ENCODE measurements at regions of chr5 and their contacts with region 1.

Region 1: GRCh38 chr5:68215208-68215897 is at the start of gene PIK3R1:
- DNase-seq: peak; percentile 96
- ATAC-seq: peak; percentile 85
- H3K4me3 Mint-ChIP-seq: peak within 1 kb of the TSS; percentile 83
- H3K27ac Mint-ChIP-seq: peak within 1 kb of the TSS; percentile 97
- H3K4me1 Mint-ChIP-seq: peaks cover 45% of the 10 kb centered on the region
- H3K27me3 Mint-ChIP-seq: no peaks in the 10 kb centered on the region
- total RNA-seq, gene PIK3R1: 40.0 to 49.0 TPM

Region 2: GRCh38 chr5:67165526-67166459 is 1049.6 kb before region 1 on chr5:
- CTCF ChIA-PET with region 1: no interaction called
- POLR2A ChIA-PET with region 1: no interaction called
- intact Hi-C with region 1: loop called in 1 of 2 experiments (anchors 10 kb)
- DNase-seq: peak; percentile 89
- ATAC-seq: peak; percentile 76
- H3K4me3 Mint-ChIP-seq: peak overlapping the region; percentile 74
- H3K27ac Mint-ChIP-seq: peak overlapping the region; percentile 97
- H3K4me1 Mint-ChIP-seq: peaks cover 57% of the 10 kb centered on the region
- H3K27me3 Mint-ChIP-seq: no peaks in the 10 kb centered on the region

Region 3: GRCh38 chr5:68170826-68171558 is 44.4 kb before region 1 on chr5:
- CTCF ChIA-PET with region 1: no interaction called
- POLR2A ChIA-PET with region 1: no interaction called
- intact Hi-C with region 1: no loop called
- DNase-seq: no peak
- ATAC-seq: no peak
- H3K4me3 Mint-ChIP-seq: no peak overlapping the region
- H3K27ac Mint-ChIP-seq: no peak overlapping the region
- H3K4me1 Mint-ChIP-seq: no peaks in the 10 kb centered on the region
- H3K27me3 Mint-ChIP-seq: no peaks in the 10 kb centered on the region

Region 4: GRCh38 chr5:68239487-68239886 is 24.1 kb after region 1 on chr5:
- CTCF ChIA-PET with region 1: interaction called, 8 read pairs
- POLR2A ChIA-PET with region 1: interaction called, 5 read pairs
- intact Hi-C with region 1: loop called (anchors 1 to 2 kb)
- DNase-seq: peak; percentile 92
- ATAC-seq: peak; percentile 97
- H3K4me3 Mint-ChIP-seq: peak overlapping the region; percentile 57
- H3K27ac Mint-ChIP-seq: peak overlapping the region; percentile 76
- H3K4me1 Mint-ChIP-seq: peaks cover 78% of the 10 kb centered on the region
- H3K27me3 Mint-ChIP-seq: no peaks in the 10 kb centered on the region

Region 5: DNA sequence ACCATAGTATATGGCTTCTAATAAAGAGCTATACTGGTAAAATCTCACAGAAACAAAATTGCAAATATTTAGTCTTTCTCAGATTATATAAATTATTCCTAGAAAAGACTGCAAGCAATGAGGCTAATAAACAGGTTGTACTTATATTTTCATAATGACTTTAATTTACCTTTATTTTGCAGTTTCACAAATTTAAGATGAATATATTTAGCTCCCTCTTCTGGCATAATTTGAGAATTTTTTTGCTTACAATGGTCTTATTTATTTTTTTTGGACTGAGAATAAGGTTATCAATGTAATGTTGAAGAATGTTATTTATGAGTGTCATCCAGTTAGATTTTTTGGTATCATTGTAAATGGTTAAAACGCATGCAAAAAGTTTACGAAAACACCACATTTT is 56.9 kb after region 1 on chr5:
- CTCF ChIA-PET with region 1: interaction called, 9 read pairs
- POLR2A ChIA-PET with region 1: interaction called, 4 read pairs
- intact Hi-C with region 1: loop called in 1 of 2 experiments (anchors 5 kb)
- DNase-seq: no peak
- ATAC-seq: no peak
- H3K4me3 Mint-ChIP-seq: no peak overlapping the region
- H3K27ac Mint-ChIP-seq: no peak overlapping the region
- H3K4me1 Mint-ChIP-seq: peaks cover 81% of the 10 kb centered on the region
- H3K27me3 Mint-ChIP-seq: no peaks in the 10 kb centered on the region

Region 6: GRCh38 chr5:68279984-68280383 is 64.6 kb after region 1 on chr5:
- CTCF ChIA-PET with region 1: no interaction called
- POLR2A ChIA-PET with region 1: interaction called, 4 read pairs
- intact Hi-C with region 1: loop called in 1 of 2 experiments (anchors 1 kb)
- DNase-seq: peak; percentile 54
- ATAC-seq: peak; percentile 91
- H3K4me3 Mint-ChIP-seq: peak overlapping the region; percentile 69
- H3K27ac Mint-ChIP-seq: peak overlapping the region; percentile 96
- H3K4me1 Mint-ChIP-seq: peaks cover 92% of the 10 kb centered on the region
- H3K27me3 Mint-ChIP-seq: no peaks in the 10 kb centered on the region